T-cell (primary cell): ENCODE measurements at regions of chr13 and their contacts with region 1.

Region 1: DNA sequence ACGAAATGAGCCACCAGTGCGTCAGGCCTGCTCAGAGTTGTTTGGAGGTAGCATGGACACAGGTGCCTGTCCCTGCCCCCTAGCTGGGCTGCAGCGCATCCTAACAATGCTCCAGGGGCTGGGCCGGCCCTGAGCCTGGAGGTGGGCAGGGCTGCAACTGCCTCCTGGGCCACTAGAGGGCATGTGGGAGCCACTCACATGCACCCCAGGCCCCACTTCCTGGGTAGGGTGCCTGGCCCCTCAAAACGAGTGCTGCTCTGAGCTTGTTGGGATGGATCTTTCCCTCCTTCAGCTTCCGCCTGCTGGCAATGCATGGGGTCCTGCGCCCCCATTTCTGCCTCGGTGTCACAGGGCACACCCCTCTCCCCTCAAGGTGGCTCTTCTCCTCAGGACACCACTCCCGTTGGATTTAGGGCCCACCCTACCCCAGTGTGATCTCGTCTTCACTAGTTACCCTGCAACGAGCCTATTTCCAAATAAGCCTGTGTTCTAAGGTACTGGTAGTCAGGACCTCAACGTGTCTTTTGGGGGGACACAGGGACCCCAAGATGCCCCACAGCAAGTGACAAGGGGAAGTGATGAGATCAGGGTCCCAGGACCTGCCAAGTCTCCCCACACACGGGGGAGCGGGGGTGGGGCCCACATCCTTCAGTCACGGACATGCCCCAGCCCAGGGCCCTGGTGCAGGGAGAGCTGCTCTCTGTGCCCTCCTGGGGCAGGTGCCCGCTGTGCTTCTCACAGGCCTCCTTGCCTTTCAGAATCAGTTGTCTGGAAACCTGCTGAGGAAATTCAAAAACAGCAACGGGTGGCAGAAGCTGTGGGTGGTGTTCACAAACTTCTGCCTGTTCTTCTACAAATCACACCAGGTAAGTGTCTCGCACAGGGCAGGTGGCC is 131.3 kb downstream of the STK24 start:
- DNase-seq: peak; percentile 49 to 88 (median 75)
- ATAC-seq: peak; percentile 92 to 95 (median 95)
- H3K4me3 ChIP-seq: no peak overlapping the region
- H3K4me3 Mint-ChIP-seq: peak overlapping the region in 2 of 3 donors; percentile 18 to 58
- H3K27ac ChIP-seq: peak overlapping the region; percentile 85
- H3K27ac Mint-ChIP-seq: peak overlapping the region; percentile 91 to 93
- H3K4me1 ChIP-seq: peaks cover 2 to 18% of the 10 kb centered on the region in 2 experiments
- H3K4me1 Mint-ChIP-seq: peaks cover 11 to 18% (median 18%) of the 10 kb centered on the region in 3 donors
- H3K27me3 ChIP-seq: no peaks in the 10 kb centered on the region
- H3K27me3 Mint-ChIP-seq: no peaks in the 10 kb centered on the region

Region 2: GRCh38 chr13:98429977-98430736 is 15.4 kb before region 1 on chr13:
- CTCF ChIA-PET with region 1: no interaction called
- POLR2A ChIA-PET with region 1: no interaction called
- DNase-seq: no peak
- ATAC-seq: no peak
- H3K4me3 ChIP-seq: no peak overlapping the region
- H3K4me3 Mint-ChIP-seq: no peak overlapping the region
- H3K27ac ChIP-seq: no peak overlapping the region
- H3K27ac Mint-ChIP-seq: no peak overlapping the region
- H3K4me1 ChIP-seq: no peaks in the 10 kb centered on the region
- H3K4me1 Mint-ChIP-seq: no peaks in the 10 kb centered on the region
- H3K27me3 ChIP-seq: peaks cover 0 to 30% of the 10 kb centered on the region in 2 experiments
- H3K27me3 Mint-ChIP-seq: peaks cover 18 to 38% of the 10 kb centered on the region in 2 donors

Region 3: DNA sequence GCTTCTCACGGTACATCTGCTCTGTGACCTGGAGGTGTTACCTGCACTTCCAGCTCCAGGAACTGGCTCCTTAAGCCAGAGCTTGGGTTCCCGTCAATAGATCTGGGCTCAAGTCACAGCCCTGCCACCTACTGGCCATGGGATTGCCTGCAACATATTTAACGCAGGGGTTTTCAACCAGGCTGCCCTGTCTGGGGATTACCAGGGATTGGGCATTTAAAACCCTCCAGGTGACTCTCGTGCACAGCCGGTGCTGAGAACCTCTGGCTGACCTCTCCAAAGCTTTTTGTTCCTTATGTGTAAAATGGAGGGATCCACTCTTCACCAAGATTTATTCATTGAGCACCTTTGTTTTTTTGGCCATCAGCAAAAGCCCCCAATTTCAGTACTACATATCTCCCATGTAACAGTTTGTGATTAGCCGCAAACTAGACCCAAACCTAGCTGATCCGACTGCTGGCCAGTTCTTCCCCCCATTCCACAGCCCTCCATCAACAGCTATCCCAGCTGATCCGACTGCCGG is 207.9 kb after region 1 on chr13:
- CTCF ChIA-PET with region 1: interaction called, 46 to 49 read pairs
- POLR2A ChIA-PET with region 1: no interaction called
- DNase-seq: peak; percentile 35 to 82 (median 62)
- ATAC-seq: peak; percentile 83 to 91 (median 88)
- H3K4me3 ChIP-seq: no peak overlapping the region
- H3K4me3 Mint-ChIP-seq: peak overlapping the region in 2 of 3 donors; percentile 44 to 48
- H3K27ac ChIP-seq: no peak overlapping the region
- H3K27ac Mint-ChIP-seq: no peak overlapping the region
- H3K4me1 ChIP-seq: peaks cover 2 to 7% of the 10 kb centered on the region in 2 experiments
- H3K4me1 Mint-ChIP-seq: peaks cover 3 to 6% (median 3%) of the 10 kb centered on the region in 3 donors
- H3K27me3 ChIP-seq: peaks cover 0 to 11% of the 10 kb centered on the region in 2 experiments
- H3K27me3 Mint-ChIP-seq: peaks cover 4% of the 10 kb centered on the region in 2 donors

Region 4: DNA sequence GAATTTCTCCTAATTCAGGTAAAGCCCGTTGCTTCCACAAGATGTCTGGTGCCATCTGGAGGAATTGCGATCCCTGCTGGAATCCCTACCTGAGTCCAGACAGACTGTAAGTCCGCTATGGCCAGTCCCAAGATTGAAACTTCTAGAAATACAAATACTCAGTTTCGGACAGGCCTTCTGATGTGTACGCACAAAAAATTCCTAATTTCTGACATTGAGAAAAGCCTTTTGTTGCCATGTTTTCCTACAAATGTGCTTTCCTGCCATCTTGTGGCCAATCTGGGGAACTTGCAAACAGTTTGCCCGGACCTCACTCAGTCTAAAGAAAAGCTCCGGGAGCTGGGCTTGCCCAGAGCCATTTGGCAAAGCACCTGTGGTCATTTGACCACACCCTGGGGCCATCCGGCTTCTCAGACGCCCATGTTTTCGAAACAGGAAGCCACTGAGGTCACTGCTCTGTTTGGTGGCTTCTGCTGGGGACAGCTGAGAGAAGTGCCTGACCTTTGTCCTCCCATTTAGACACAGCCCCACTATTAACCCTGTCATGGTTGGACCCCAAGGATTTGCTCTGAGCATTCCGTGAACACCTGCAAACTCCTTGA is 227.5 kb after region 1 on chr13:
- CTCF ChIA-PET with region 1: interaction called, 13 to 20 read pairs
- POLR2A ChIA-PET with region 1: no interaction called
- DNase-seq: peak in 34 of 35 experiments; percentile 1 to 70 (median 24)
- ATAC-seq: peak in 3 of 4 experiments; percentile 48 to 66 (median 54)
- H3K4me3 ChIP-seq: no peak overlapping the region
- H3K4me3 Mint-ChIP-seq: no peak overlapping the region
- H3K27ac ChIP-seq: no peak overlapping the region
- H3K27ac Mint-ChIP-seq: no peak overlapping the region
- H3K4me1 ChIP-seq: peaks cover 0 to 5% of the 10 kb centered on the region in 2 experiments
- H3K4me1 Mint-ChIP-seq: peaks cover 0 to 7% (median 3%) of the 10 kb centered on the region in 3 donors
- H3K27me3 ChIP-seq: peaks cover 0 to 3% of the 10 kb centered on the region in 2 experiments
- H3K27me3 Mint-ChIP-seq: peaks cover under 1 to 4% of the 10 kb centered on the region in 2 donors